ENCODE measurements at regions of chr13 and their contacts with region 1.

Region 1: DNA sequence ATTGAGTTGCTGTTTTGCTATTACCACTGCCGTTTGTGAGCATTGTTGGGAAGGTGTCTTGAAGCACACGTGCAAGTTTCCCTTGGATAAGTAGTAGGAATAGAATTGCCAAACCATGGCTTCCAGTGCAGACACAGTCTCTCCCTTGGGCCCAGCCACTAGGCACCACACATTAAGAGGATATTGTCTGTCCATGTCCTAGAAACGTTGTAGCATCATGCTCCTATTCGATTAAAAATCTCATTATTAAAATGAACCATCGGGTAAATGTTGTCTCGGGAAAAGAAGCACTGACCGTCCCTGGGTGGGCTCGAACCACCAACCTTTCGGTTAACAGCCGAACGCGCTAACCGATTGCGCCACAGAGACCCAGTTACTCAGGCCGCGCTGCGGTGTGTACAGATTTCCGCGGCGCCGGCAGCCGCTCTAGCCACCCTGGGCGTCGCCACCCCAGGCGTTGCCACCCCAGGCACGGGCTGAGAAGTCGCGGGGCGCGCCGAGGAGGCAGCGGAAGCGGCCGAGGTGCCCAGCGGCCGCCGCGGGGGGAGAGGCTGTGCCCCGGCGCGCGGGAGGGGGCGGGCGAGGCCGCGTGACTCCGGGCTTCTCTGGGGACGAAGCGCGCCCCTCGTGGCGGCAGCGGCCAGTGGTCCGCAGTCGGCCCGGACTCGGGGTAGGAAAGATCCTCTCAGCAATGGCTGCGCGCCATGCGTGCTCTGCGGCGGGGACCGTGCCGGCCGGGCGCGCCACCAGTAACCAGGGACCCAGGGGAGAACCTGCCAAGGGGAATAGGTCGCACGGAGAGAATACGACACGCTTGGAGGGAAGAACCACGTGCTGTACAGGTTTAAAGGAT is 56.2 kb downstream of the USPL1 start:
- DNase-seq: peak; percentile 88 to 95
- H3K4me3 ChIP-seq: peak overlapping the region; percentile 51
- H3K4me3 Mint-ChIP-seq: peak overlapping the region; percentile 75
- H3K27ac Mint-ChIP-seq: peak overlapping the region; percentile 62
- H3K4me1 ChIP-seq: peaks cover 10% of the 10 kb centered on the region
- H3K4me1 Mint-ChIP-seq: peaks cover 15% of the 10 kb centered on the region
- H3K27me3 ChIP-seq: no peaks in the 10 kb centered on the region
- H3K27me3 Mint-ChIP-seq: no peaks in the 10 kb centered on the region
- CTCF ChIP-seq: peak; percentile 82

Region 2: GRCh38 chr13:30306762-30307193 is 367.1 kb before region 1 on chr13:
- CTCF ChIA-PET with region 1: no interaction called
- POLR2A ChIA-PET with region 1: no interaction called
- intact Hi-C with region 1: loop called (anchors 5 kb)
- DNase-seq: peak; percentile 95
- H3K4me3 ChIP-seq: peak overlapping the region; percentile 82
- H3K4me3 Mint-ChIP-seq: peak overlapping the region; percentile 77
- H3K27ac Mint-ChIP-seq: peak overlapping the region; percentile 51
- H3K4me1 ChIP-seq: 0 out of 2 replicates have a peak, but pooled peaks cover 5% of the 10 kb centered on the region
- H3K4me1 Mint-ChIP-seq: no peaks in the 10 kb centered on the region
- H3K27me3 ChIP-seq: no peaks in the 10 kb centered on the region
- H3K27me3 Mint-ChIP-seq: peaks cover 6% of the 10 kb centered on the region
- CTCF ChIP-seq: no peak

Region 3: DNA sequence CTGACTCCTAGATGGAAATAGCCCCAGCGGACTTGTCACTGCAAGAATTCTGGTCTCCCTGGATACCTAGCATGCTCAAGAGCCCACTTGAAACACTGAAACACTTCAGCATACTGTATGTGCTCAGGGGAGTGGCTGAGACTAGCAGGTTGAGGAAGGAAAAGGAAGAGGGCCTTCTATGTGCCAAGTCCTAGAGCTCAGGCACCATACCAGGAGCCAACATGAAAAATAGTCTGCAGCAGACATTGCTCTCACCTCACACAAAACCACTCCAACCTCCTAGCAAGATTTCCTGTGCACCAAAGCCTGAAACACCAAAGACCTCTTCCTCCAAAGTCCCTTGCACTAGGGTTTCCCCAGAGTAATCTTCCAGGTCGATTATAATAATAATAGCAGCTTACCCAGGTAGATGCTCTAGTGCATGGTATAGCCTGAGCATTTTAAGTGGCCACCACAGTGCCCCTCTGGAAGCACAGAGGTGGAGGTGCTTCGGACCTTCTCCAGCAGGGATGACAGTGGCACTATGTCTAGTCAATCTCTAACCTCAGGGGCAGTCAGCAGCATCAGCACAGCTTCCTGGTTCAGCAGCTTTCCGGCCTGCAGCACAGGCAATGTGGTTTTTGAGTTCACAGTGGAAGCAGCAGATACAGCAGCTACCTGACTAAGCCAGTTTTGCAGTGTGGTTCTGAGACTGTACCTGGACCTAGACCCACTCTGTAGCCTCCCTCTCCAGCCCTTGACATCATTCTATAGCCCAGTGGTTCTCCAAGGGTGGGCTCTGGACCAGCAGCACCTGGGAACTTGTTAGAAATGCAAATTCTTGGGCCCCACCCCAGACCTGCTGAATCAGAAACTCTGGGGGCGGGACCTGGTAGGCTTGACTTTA is 297.2 kb before region 1 on chr13:
- CTCF ChIA-PET with region 1: no interaction called
- POLR2A ChIA-PET with region 1: no interaction called
- intact Hi-C with region 1: no loop called
- DNase-seq: peak in 1 of 2 experiments; percentile 12
- H3K4me3 ChIP-seq: no peak overlapping the region
- H3K4me3 Mint-ChIP-seq: no peak overlapping the region
- H3K27ac Mint-ChIP-seq: no peak overlapping the region
- H3K4me1 ChIP-seq: peaks cover 5% of the 10 kb centered on the region; the same call in 1 of the 2 replicates
- H3K4me1 Mint-ChIP-seq: no peaks in the 10 kb centered on the region
- H3K27me3 ChIP-seq: no peaks in the 10 kb centered on the region
- H3K27me3 Mint-ChIP-seq: peaks cover 3% of the 10 kb centered on the region
- CTCF ChIP-seq: no peak

Region 4: DNA sequence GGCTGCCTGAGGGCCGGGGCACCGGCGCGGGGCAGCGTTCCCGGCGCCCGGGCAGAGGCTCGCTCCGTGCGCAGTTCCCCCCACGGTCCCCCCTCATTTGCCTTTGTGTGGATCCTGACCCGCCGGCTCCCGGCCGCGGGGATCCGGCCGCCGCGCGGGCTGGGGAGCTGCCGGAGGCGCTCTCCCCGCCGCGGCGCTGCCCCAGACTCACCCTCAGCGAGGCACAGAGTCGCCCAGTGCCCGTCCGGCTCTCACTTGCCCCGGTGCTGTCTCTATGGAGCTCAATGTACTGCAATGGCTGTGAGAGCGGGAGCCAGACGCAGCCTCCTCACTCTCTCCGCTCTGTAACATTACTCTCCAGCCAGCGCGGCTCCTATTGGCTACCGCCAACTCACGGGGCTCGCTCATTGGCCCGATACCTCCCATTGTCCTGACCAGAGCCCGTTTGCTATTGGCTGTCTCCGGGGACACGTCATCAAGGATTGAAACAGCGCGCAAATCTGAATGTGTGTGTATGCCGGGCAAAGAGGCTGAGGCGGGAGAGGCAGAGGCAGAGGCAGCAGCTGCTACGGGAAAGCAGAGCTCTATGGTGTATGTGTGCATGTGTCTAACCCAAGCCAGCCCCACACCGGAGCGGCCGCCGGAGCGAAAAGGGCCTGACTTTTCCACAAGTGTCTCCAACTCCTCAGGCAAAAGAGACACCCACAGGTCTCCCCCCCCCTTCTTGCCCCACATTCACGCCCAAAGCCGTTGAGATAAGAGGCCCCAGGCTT is 208.1 kb before region 1 on chr13 and contains the start of gene HMGB1:
- CTCF ChIA-PET with region 1: no interaction called
- POLR2A ChIA-PET with region 1: no interaction called
- intact Hi-C with region 1: loop called (anchors 5 kb)
- DNase-seq: peak; percentile 98 to 99
- H3K4me3 ChIP-seq: peak within 1 kb of the TSS; percentile 52
- H3K4me3 Mint-ChIP-seq: peak within 1 kb of the TSS; percentile 98
- H3K27ac Mint-ChIP-seq: peak within 1 kb of the TSS; percentile 100
- H3K4me1 ChIP-seq: peaks cover 12% of the 10 kb centered on the region
- H3K4me1 Mint-ChIP-seq: no peaks in the 10 kb centered on the region
- H3K27me3 ChIP-seq: no peaks in the 10 kb centered on the region
- H3K27me3 Mint-ChIP-seq: peaks cover 2% of the 10 kb centered on the region
- CTCF ChIP-seq: no peak
- total RNA-seq, gene HMGB1: 569 and 598 TPM in 2 replicates

Region 5: DNA sequence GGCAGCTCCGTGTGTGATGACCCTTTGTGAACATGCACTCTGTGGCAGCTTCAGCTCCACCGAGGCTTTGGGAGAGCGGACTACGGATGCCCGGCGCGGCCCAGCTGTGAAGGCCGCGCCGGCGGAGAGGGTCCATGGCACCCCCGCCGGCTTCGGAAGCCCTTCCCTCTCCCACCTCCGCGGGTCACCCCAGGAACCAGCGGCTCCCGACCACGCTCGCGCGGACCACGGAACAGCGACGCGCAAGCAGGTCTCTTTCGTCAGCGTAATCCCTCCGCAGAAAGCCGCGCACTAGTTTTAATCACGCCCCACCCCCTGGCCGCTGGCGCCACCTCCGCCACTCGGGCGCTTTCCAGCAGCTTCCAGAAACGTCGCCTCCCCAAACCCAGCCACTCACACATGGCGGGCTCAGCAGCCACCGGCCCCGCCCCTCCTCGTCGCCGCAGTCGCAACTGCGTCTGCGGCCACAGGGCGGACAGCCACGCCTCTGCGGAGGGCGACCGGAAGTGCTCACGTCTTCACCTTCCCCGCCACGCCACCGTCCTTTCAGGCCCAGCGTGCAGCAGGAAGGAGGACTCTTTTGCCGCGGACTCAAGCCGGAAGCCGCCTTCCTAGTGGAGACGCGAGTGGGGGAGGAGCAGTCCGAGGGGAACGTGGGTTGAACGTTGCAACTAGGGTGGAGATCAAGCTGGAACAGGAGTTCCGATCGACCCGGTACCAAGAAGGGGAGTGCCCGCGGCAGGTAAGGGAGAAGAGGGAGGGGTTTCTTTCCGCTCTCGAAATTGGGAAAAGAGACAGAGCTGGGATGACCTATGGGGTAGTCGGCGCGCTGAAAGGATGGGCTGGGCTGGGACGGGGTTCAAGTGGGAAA is 56.3 kb before region 1 on chr13 and contains the start of gene USPL1:
- CTCF ChIA-PET with region 1: no interaction called
- POLR2A ChIA-PET with region 1: no interaction called
- intact Hi-C with region 1: loop called (anchors 1 kb)
- DNase-seq: peak; percentile 99
- H3K4me3 ChIP-seq: peak within 1 kb of the TSS; percentile 61
- H3K4me3 Mint-ChIP-seq: no peak within 1 kb of the TSS
- H3K27ac Mint-ChIP-seq: no peak within 1 kb of the TSS
- H3K4me1 ChIP-seq: 0 out of 2 replicates have a peak, but pooled peaks cover 8% of the 10 kb centered on the region
- H3K4me1 Mint-ChIP-seq: no peaks in the 10 kb centered on the region
- H3K27me3 ChIP-seq: no peaks in the 10 kb centered on the region
- H3K27me3 Mint-ChIP-seq: no peaks in the 10 kb centered on the region
- CTCF ChIP-seq: no peak
- total RNA-seq, gene USPL1: 23.4 and 26.7 TPM in 2 replicates

Region 6: GRCh38 chr13:30654430-30654829 is 19.5 kb before region 1 on chr13:
- CTCF ChIA-PET with region 1: no interaction called
- POLR2A ChIA-PET with region 1: no interaction called
- intact Hi-C with region 1: loop called (anchors 2 kb)
- DNase-seq: no peak
- H3K4me3 ChIP-seq: no peak overlapping the region
- H3K4me3 Mint-ChIP-seq: no peak overlapping the region
- H3K27ac Mint-ChIP-seq: peak overlapping the region; percentile 13
- H3K4me1 ChIP-seq: peaks cover 35% of the 10 kb centered on the region
- H3K4me1 Mint-ChIP-seq: peaks cover 31% of the 10 kb centered on the region
- H3K27me3 ChIP-seq: no peaks in the 10 kb centered on the region
- H3K27me3 Mint-ChIP-seq: no peaks in the 10 kb centered on the region
- CTCF ChIP-seq: no peak

Region 7: GRCh38 chr13:30720172-30720869 is 46.4 kb after region 1 on chr13:
- CTCF ChIA-PET with region 1: no interaction called
- POLR2A ChIA-PET with region 1: no interaction called
- intact Hi-C with region 1: no loop called
- DNase-seq: no peak
- H3K4me3 ChIP-seq: no peak overlapping the region
- H3K4me3 Mint-ChIP-seq: no peak overlapping the region
- H3K27ac Mint-ChIP-seq: no peak overlapping the region
- H3K4me1 ChIP-seq: no peaks in the 10 kb centered on the region
- H3K4me1 Mint-ChIP-seq: no peaks in the 10 kb centered on the region
- H3K27me3 ChIP-seq: no peaks in the 10 kb centered on the region
- H3K27me3 Mint-ChIP-seq: no peaks in the 10 kb centered on the region
- CTCF ChIP-seq: no peak

Region 8: GRCh38 chr13:30739761-30740642 is 66.1 kb after region 1 on chr13:
- CTCF ChIA-PET with region 1: no interaction called
- POLR2A ChIA-PET with region 1: no interaction called
- intact Hi-C with region 1: loop called (anchors 5 kb)
- DNase-seq: peak in 1 of 2 experiments; percentile 14
- H3K4me3 ChIP-seq: no peak overlapping the region
- H3K4me3 Mint-ChIP-seq: no peak overlapping the region
- H3K27ac Mint-ChIP-seq: peak overlapping the region; percentile 22
- H3K4me1 ChIP-seq: peaks cover 38% of the 10 kb centered on the region
- H3K4me1 Mint-ChIP-seq: peaks cover 32% of the 10 kb centered on the region
- H3K27me3 ChIP-seq: no peaks in the 10 kb centered on the region
- H3K27me3 Mint-ChIP-seq: no peaks in the 10 kb centered on the region
- CTCF ChIP-seq: no peak

Region 9: GRCh38 chr13:30865123-30866049 is 191.5 kb after region 1 on chr13:
- CTCF ChIA-PET with region 1: interaction called, 9 read pairs
- POLR2A ChIA-PET with region 1: no interaction called
- intact Hi-C with region 1: loop called (anchors 1 kb)
- DNase-seq: peak; percentile 71 to 72
- H3K4me3 ChIP-seq: no peak overlapping the region
- H3K4me3 Mint-ChIP-seq: no peak overlapping the region
- H3K27ac Mint-ChIP-seq: peak overlapping the region; percentile 16
- H3K4me1 ChIP-seq: 0 out of 2 replicates have a peak, but pooled peaks cover 7% of the 10 kb centered on the region
- H3K4me1 Mint-ChIP-seq: peaks cover 12% of the 10 kb centered on the region
- H3K27me3 ChIP-seq: no peaks in the 10 kb centered on the region
- H3K27me3 Mint-ChIP-seq: peaks cover 2% of the 10 kb centered on the region
- CTCF ChIP-seq: peak; percentile 84 to 95